ENCODE measurements at regions of chr15 and their contacts with region 1.

Region 1: DNA sequence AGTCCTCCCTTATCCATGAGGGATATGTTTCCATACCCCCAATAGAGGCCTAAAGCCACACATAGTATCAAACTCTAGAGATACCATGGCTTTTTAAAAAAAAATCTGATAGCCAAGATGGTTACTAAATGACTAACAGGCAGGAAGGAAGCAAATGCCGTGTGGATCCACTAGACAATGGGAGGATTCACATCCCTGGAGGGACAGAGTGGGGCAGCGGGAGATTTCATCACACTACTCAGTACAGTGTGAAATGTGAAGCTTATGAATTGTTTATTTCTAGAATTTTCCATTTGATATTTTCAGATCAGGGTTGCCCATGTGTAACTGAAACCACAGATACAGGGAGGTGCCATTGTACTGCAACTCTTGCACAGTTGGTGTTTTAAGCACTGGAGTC is 826.6 kb downstream of the SQOR start:
- DNase-seq: peak; percentile 3
- ATAC-seq: no peak; the same call in 2 of the 3 replicates
- H3K4me3 ChIP-seq: no peak overlapping the region
- H3K27ac ChIP-seq: no peak overlapping the region
- H3K4me1 ChIP-seq: peaks cover 14% of the 10 kb centered on the region; the same call in 1 of the 2 replicates
- H3K27me3 ChIP-seq: no peaks in the 10 kb centered on the region
- CTCF ChIP-seq: no peak
- EP300 ChIP-seq: no peak
- POLR2A ChIP-seq: no peak
- RAD21 ChIP-seq: no peak

Region 2: GRCh38 chr15:46450112-46450809 is 11.2 kb before region 1 on chr15:
- CTCF ChIA-PET with region 1: no interaction called
- POLR2A ChIA-PET with region 1: no interaction called
- in situ Hi-C with region 1: no loop called
- intact Hi-C with region 1: loop called (anchors 2 kb)
- DNase-seq: peak; percentile 71
- ATAC-seq: peak; percentile 72
- H3K4me3 ChIP-seq: peak overlapping the region in 2 of 3 experiments; percentile 31 to 34; a peak in 3 of 6 replicates
- H3K27ac ChIP-seq: peak overlapping the region; percentile 69
- H3K4me1 ChIP-seq: peaks cover 39% of the 10 kb centered on the region
- H3K27me3 ChIP-seq: no peaks in the 10 kb centered on the region
- CTCF ChIP-seq: no peak
- EP300 ChIP-seq: no peak
- POLR2A ChIP-seq: no peak
- RAD21 ChIP-seq: no peak

Region 3: GRCh38 chr15:47339803-47340572 is 878.6 kb after region 1 on chr15:
- CTCF ChIA-PET with region 1: no interaction called
- POLR2A ChIA-PET with region 1: no interaction called
- in situ Hi-C with region 1: no loop called
- intact Hi-C with region 1: no loop called
- DNase-seq: no peak
- ATAC-seq: no peak
- H3K4me3 ChIP-seq: no peak overlapping the region
- H3K27ac ChIP-seq: no peak overlapping the region
- H3K4me1 ChIP-seq: no peaks in the 10 kb centered on the region
- H3K27me3 ChIP-seq: no peaks in the 10 kb centered on the region
- CTCF ChIP-seq: no peak
- EP300 ChIP-seq: no peak
- POLR2A ChIP-seq: no peak
- RAD21 ChIP-seq: no peak

Measured in HepG2 (cell line).